IMR-90 (cell line): ENCODE measurements at regions of chr18 and their contacts with region 1.

Region 1: GRCh38 chr18:21444465-21445023 is 156.0 kb downstream of the ESCO1 start:
- DNase-seq: peak; percentile 59
- ATAC-seq: peak; percentile 79
- H3K4me3 ChIP-seq: no peak overlapping the region
- H3K27ac ChIP-seq: no peak overlapping the region
- H3K4me1 ChIP-seq: peaks cover 2% of the 10 kb centered on the region
- H3K27me3 ChIP-seq: peaks cover 5% of the 10 kb centered on the region
- CTCF ChIP-seq: peak; percentile 67
- POLR2A ChIP-seq: no peak
- RAD21 ChIP-seq: peak; percentile 65

Region 2: GRCh38 chr18:20971886-20972267 is 472.7 kb before region 1 on chr18:
- CTCF ChIA-PET with region 1: interaction called, 3 read pairs
- POLR2A ChIA-PET with region 1: no interaction called
- dilution Hi-C with region 1: no loop called
- in situ Hi-C with region 1: loop called (anchors 10 kb)
- intact Hi-C with region 1: no loop called
- DNase-seq: peak; percentile 19
- ATAC-seq: peak; percentile 71
- H3K4me3 ChIP-seq: no peak overlapping the region
- H3K27ac ChIP-seq: no peak overlapping the region
- H3K4me1 ChIP-seq: no peaks in the 10 kb centered on the region
- H3K27me3 ChIP-seq: no peaks in the 10 kb centered on the region
- CTCF ChIP-seq: peak; percentile 50
- POLR2A ChIP-seq: no peak
- RAD21 ChIP-seq: peak; percentile 50

Region 3: GRCh38 chr18:21074336-21075323 is 369.9 kb before region 1 on chr18:
- CTCF ChIA-PET with region 1: no interaction called
- POLR2A ChIA-PET with region 1: no interaction called
- dilution Hi-C with region 1: no loop called
- in situ Hi-C with region 1: no loop called
- intact Hi-C with region 1: loop called (anchors 5 kb)
- DNase-seq: no peak
- ATAC-seq: no peak
- H3K4me3 ChIP-seq: no peak overlapping the region
- H3K27ac ChIP-seq: no peak overlapping the region
- H3K4me1 ChIP-seq: no peaks in the 10 kb centered on the region
- H3K27me3 ChIP-seq: no peaks in the 10 kb centered on the region
- CTCF ChIP-seq: no peak
- POLR2A ChIP-seq: no peak
- RAD21 ChIP-seq: no peak

Region 4: GRCh38 chr18:21194871-21195771 is 249.4 kb before region 1 on chr18:
- CTCF ChIA-PET with region 1: interaction called, 15 read pairs
- POLR2A ChIA-PET with region 1: no interaction called
- dilution Hi-C with region 1: no loop called
- in situ Hi-C with region 1: loop called (anchors 5 kb)
- intact Hi-C with region 1: loop called (anchors 1 kb)
- DNase-seq: peak; percentile 58
- ATAC-seq: peak; percentile 71; the same call in 1 of the 2 replicates
- H3K4me3 ChIP-seq: no peak overlapping the region
- H3K27ac ChIP-seq: no peak overlapping the region
- H3K4me1 ChIP-seq: no peaks in the 10 kb centered on the region
- H3K27me3 ChIP-seq: peaks cover 11% of the 10 kb centered on the region; the same call in 1 of the 2 replicates
- CTCF ChIP-seq: peak; percentile 77
- POLR2A ChIP-seq: no peak
- RAD21 ChIP-seq: peak; percentile 78

Region 5: DNA sequence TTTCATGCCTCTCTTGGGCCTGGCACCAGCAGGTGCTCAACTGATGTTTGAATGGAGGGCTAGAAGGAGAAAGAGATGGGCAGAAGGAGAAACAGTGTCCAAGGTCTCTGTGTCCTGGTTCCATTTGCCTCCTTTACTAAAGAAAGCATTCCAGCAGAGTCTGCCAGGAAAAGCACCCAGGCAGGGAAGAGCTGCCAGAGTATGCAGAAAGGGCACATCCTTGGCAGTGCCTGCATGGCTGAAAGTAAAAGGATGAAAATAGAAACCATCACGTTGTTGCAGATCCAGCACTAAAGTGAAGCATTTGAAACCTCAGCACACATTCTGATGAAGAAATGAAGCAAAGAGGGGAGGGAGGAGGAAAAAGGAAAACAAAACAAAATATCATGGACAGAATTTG is 13.8 kb after region 1 on chr18:
- CTCF ChIA-PET with region 1: interaction called, 3 read pairs
- POLR2A ChIA-PET with region 1: interaction called, 28 read pairs
- dilution Hi-C with region 1: no loop called
- in situ Hi-C with region 1: no loop called
- intact Hi-C with region 1: no loop called
- DNase-seq: no peak
- ATAC-seq: no peak
- H3K4me3 ChIP-seq: no peak overlapping the region
- H3K27ac ChIP-seq: no peak overlapping the region
- H3K4me1 ChIP-seq: 0 out of 2 replicates have a peak, but pooled peaks cover 2% of the 10 kb centered on the region
- H3K27me3 ChIP-seq: peaks cover 18% of the 10 kb centered on the region
- CTCF ChIP-seq: no peak
- POLR2A ChIP-seq: no peak
- RAD21 ChIP-seq: no peak

Region 6: DNA sequence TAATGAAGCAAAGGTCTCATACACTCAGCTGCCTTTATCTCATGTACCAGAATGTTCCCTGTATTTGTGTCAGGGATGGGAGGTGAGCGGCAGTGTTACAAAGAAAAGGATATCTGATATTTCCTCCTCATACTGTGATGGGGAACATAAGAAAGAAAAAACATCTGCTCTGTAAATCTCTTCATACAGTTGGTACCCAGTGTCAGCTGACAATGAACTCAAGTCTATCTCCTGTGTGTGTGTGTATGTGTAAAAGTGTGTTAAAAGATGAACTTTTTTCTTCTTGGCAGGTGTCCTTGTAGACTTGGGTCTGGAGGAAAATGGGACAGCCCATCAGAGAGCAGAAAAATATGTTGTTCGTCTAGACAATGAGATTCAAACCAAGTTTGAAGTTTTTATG is 28.2 kb after region 1 on chr18:
- CTCF ChIA-PET with region 1: no interaction called
- POLR2A ChIA-PET with region 1: no interaction called
- dilution Hi-C with region 1: no loop called
- in situ Hi-C with region 1: no loop called
- intact Hi-C with region 1: no loop called
- DNase-seq: no peak
- ATAC-seq: no peak
- H3K4me3 ChIP-seq: no peak overlapping the region
- H3K27ac ChIP-seq: no peak overlapping the region
- H3K4me1 ChIP-seq: no peaks in the 10 kb centered on the region
- H3K27me3 ChIP-seq: no peaks in the 10 kb centered on the region; the same call in 1 of the 2 replicates
- CTCF ChIP-seq: no peak
- POLR2A ChIP-seq: no peak
- RAD21 ChIP-seq: no peak

Region 7: DNA sequence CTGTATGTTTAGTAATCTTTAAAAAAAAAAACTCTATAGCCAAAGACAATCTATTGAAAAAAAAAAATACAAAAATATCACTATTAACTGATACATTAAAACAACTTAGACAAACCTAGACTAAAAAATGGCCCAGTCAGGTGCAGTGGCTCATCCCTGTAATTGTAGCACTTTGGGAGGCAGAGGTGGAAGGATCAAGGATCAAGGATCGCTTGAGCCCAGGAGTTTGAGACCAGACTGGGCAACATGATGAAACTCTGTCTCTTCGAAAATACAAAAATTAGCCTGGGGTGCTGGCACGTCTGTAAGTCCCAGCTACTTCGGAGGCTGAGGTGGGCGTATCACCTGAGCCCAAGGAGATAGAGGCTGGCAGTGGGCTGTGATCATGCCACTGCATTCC is 139.8 kb after region 1 on chr18:
- CTCF ChIA-PET with region 1: no interaction called
- POLR2A ChIA-PET with region 1: no interaction called
- dilution Hi-C with region 1: no loop called
- in situ Hi-C with region 1: no loop called
- intact Hi-C with region 1: no loop called
- DNase-seq: no peak
- ATAC-seq: no peak
- H3K4me3 ChIP-seq: no peak overlapping the region
- H3K27ac ChIP-seq: no peak overlapping the region
- H3K4me1 ChIP-seq: no peaks in the 10 kb centered on the region
- H3K27me3 ChIP-seq: no peaks in the 10 kb centered on the region
- CTCF ChIP-seq: no peak
- POLR2A ChIP-seq: no peak
- RAD21 ChIP-seq: no peak